PC-9 (cell line): ENCODE measurements at regions of chr7 and their contacts with region 1.

Region 1: DNA sequence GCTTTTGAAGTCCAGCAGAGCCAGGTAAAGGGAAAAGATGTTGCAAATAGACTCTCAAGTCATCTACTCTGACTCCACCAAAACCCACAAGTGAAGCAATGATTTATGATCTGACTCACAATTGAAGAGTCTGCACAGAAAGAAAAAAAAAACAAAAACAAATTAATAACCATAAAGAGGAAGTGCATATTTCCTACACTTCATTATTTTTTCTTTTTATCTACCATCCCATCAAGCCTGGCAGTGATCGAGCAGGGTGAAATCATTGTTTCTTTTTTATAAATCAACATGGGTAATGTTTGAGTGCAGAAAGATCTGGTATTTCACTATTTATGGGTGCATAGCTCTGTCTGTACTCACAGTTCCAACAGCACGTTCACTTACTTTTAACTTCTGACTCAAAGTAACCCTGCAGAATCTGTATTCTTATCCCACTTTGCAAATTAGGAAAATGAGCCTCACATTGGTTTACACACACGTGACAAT is 829.0 kb downstream of the TNS3 start:
- DNase-seq: peak; percentile 32 to 96
- H3K4me3 ChIP-seq: peak overlapping the region; percentile 23; the same call in 1 of the 2 replicates
- H3K27ac ChIP-seq: peak overlapping the region; percentile 74
- H3K4me1 ChIP-seq: peaks cover 41% of the 10 kb centered on the region
- H3K27me3 ChIP-seq: no peaks in the 10 kb centered on the region
- CTCF ChIP-seq: no peak

Region 2: DNA sequence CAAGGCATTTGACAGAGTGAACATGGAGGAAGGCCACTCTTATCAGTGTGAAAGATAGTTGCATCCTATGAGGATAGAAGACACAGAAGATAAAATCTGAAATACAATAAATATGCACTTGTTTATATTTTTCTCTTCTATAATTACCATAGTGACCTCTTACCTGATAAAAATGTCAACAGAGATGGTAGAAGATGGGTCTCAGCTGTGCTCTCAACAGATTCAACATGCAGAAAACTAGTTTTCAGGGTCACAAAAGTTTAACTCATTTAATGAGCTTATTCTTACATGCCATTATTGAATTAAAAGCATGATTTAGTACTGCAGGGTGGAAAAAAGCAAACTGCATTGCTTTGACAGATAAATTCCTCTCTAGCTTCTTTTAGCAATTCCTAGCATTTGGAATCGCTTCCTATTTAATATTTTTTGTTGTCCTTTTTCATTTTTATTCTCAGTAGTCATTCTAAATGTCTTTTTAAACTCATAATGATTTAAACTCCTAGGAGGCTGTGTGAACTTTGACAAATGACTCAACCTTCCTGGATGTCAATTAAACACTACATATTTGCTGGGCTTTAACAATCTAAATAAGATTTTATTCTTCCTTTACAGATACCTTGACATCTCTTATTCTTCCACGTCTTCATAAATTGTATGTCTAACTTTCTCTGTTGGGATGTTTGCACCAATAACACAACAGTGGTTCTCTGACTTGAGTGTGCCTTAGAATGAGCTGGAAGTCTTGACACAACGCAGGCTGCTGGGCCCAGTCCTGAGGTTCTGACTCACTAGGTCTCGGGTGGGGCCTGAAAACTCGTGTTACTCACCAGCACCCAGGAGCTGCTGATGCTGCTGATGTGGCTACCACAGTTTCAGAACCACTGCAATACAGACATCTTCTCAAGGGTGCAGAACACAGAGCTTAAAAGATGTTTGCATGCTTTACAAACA is 266.4 kb before region 1 on chr7:
- CTCF ChIA-PET with region 1: no interaction called
- POLR2A ChIA-PET with region 1: interaction called, 5 read pairs
- intact Hi-C with region 1: loop called (anchors 5 kb)
- DNase-seq: no peak
- H3K4me3 ChIP-seq: no peak overlapping the region
- H3K27ac ChIP-seq: peak overlapping the region; percentile 18
- H3K4me1 ChIP-seq: peaks cover 26% of the 10 kb centered on the region
- H3K27me3 ChIP-seq: no peaks in the 10 kb centered on the region
- CTCF ChIP-seq: no peak

Region 3: DNA sequence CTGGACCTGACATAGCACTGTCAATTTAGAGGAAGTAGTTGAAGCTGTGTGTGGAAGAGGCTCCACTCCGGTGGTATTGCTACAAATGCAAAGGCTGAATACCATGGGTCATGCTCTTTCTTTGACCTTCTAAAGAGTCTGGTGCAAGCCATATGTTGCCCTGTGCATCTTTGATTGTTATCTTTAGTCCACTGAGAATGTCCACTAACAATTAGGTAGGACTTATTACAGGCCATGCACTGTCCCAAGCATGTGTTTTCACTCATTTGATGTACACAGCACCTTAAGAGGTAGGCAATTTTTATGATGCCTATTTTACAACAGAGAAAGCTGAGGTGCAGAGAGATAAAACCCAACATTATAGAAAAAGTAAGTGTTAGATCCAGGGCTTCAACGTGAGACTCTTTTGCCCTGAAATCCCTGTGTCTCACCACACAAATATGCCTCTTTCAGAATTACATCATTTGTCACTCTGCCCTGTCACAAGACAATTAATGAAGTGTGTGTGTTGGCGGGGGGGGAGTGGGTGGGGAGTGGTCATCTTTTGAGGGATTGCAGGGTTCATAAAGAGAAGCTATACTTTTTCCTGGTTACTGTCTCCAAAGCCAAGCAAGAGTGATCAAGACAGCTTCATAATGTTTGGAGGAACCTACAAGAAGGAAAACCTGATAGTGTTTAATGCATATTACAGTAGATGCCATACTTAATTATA is 194.3 kb before region 1 on chr7:
- CTCF ChIA-PET with region 1: no interaction called
- POLR2A ChIA-PET with region 1: no interaction called
- intact Hi-C with region 1: loop called (anchors 2 kb)
- DNase-seq: peak; percentile 45 to 87
- H3K4me3 ChIP-seq: peak overlapping the region; percentile 21; the same call in 1 of the 2 replicates
- H3K27ac ChIP-seq: peak overlapping the region; percentile 93
- H3K4me1 ChIP-seq: peaks cover 34% of the 10 kb centered on the region
- H3K27me3 ChIP-seq: no peaks in the 10 kb centered on the region
- CTCF ChIP-seq: no peak

Region 4: DNA sequence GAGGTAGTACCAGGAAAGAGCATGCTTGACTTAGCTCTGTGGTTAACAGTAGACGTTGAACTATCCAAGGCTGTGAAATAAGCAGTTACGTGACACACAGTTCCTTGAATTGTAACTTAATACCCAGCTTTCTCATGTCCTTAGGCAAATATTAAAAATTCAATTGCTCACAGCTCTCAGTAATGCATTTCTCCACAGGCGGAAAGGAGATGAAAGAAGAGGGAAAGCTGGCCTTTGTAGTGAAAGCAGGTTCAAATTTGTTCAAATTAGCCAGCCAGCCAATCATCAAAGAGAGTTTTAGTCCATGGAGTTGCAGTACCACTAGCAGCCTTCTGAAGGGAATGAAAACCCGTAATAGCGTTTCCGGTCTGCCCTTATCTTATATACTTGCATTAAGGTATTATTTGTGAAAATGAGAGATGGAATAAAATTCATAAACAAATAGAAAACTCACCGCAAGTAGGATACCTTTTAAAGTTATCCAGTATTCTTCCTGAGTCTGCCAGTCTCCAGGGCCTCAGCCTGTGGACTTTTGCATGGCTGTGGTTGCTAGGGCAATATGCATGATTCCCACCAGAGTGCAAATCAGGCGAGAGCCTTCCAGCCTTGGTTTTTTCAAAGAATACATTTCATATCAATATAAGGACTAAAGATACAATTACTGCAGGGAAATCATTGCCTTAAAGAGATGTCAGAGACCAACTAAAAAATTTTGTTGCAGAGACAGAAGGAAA is 33.5 kb after region 1 on chr7:
- CTCF ChIA-PET with region 1: no interaction called
- POLR2A ChIA-PET with region 1: no interaction called
- intact Hi-C with region 1: loop called (anchors 2 kb)
- DNase-seq: peak; percentile 40 to 95
- H3K4me3 ChIP-seq: no peak overlapping the region
- H3K27ac ChIP-seq: peak overlapping the region; percentile 60
- H3K4me1 ChIP-seq: peaks cover 35% of the 10 kb centered on the region
- H3K27me3 ChIP-seq: no peaks in the 10 kb centered on the region
- CTCF ChIP-seq: no peak